GM12878 (cell line): ENCODE measurements at regions of chr2 and their contacts with region 1.

Region 1: GRCh38 chr2:66021295-66021694 is 413.6 kb upstream of the MEIS1 start:
- DNase-seq: no peak
- ATAC-seq: no peak
- H3K4me3 ChIP-seq: no peak overlapping the region
- H3K27ac ChIP-seq: no peak overlapping the region
- H3K4me1 ChIP-seq: no peaks in the 10 kb centered on the region
- H3K27me3 ChIP-seq: no peaks in the 10 kb centered on the region
- CTCF ChIP-seq: no peak
- EP300 ChIP-seq: no peak
- POLR2A ChIP-seq: no peak
- RAD21 ChIP-seq: no peak

Region 2: DNA sequence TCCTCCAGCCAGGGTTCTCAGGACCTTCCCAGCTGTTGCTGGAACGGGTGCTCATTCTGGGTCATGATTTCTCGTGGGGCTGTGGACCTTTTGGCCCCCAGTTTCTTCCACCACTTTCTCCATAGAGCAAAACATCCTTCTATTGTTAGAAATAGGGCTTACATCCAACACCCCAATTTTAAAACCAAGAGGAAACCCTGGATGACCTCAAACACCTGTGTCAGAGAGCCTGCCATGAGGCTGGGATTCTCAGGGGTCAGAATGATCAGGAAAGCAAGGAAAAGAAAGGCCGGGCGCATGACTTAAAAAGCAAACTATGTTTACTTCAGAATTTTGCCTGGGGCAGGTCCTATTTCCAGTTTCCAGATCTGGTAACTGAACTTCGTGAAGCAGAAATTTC is 105.8 kb after region 1 on chr2:
- CTCF ChIA-PET with region 1: no interaction called
- POLR2A ChIA-PET with region 1: interaction called, 11 read pairs
- RAD21 ChIA-PET with region 1: no interaction called
- SMC1A ChIA-PET with region 1: no interaction called
- in situ Hi-C with region 1: no loop called
- intact Hi-C with region 1: no loop called
- DNase-seq: no peak
- ATAC-seq: no peak
- H3K4me3 ChIP-seq: no peak overlapping the region
- H3K27ac ChIP-seq: no peak overlapping the region
- H3K4me1 ChIP-seq: no peaks in the 10 kb centered on the region
- H3K27me3 ChIP-seq: no peaks in the 10 kb centered on the region
- CTCF ChIP-seq: no peak
- EP300 ChIP-seq: no peak
- POLR2A ChIP-seq: no peak
- RAD21 ChIP-seq: no peak